Heart right ventricle (tissue), 16 donors: ENCODE measurements at regions of chr16 and their contacts with region 1.

Region 1: GRCh38 chr16:72894293-72895151 is 153.4 kb downstream of the ZFHX3 start:
- DNase-seq: peak in 1 of 2 donors; percentile 58
- ATAC-seq: peak; percentile 60 to 84 (median 72)
- H3K4me3 ChIP-seq: peak overlapping the region in 1 of 10 donors; percentile 11
- H3K27ac ChIP-seq: peak overlapping the region in 9 of 10 donors; percentile 3 to 70 (median 57)
- H3K4me1 ChIP-seq: peaks cover 0 to 40% (median 18%) of the 10 kb centered on the region in 9 donors
- H3K27me3 ChIP-seq: no peaks in the 10 kb centered on the region
- CTCF ChIP-seq: no peak

Region 2: DNA sequence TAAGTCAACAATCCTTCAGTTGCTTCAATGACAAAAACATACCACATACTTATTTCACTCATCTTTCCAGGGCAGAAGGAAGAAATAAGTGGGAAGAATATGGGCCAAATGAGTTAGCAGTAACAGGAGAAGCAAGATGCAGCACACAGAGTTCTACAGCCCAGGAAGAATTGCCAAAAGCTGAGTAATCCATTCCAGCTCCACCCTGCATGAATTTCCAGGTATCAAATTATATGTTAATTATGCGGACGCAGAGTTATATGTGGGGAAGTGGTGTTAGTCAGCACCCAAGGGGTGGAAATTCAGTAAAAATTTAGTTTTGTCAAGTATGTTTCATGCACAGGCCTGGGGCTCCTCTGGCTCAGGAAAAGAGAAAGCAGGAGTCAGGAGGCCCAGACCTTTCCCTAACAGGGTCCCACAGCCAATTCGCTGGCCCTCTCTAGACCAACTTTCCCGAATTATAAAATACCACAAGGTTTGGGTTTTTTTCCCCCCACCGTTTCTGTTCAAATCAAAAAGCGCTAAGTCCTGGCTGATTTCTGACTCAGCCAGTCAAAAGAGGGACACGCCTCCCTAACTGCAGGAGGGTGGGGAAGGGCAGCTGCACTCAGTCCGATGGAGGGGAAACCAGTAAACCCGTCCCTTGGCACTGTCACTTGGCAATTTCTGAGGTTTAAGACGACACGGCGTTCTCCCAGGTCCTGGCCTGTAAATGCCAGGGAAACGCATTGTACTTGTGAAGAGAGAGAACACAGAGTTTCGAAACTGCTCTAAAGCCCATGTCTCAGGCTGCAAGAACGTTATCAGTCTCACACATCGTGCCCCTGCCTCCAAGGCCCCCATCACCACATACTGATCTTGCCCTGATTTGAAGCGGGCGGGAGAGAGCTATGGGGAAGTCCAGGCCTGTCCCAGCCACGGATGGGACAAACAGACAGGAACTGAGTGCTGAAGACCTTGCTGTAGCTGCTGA is 95.3 kb after region 1 on chr16:
- intact Hi-C with region 1: loop called in 1 of 10 experiments (anchors 5 kb)
- DNase-seq: peak; percentile 36 to 51
- ATAC-seq: peak in 7 of 8 donors; percentile 22 to 77 (median 44)
- H3K4me3 ChIP-seq: peak overlapping the region in 3 of 10 donors; percentile 10 to 18 (median 17)
- H3K27ac ChIP-seq: peak overlapping the region; percentile 36 to 74 (median 62)
- H3K4me1 ChIP-seq: peaks cover 22 to 90% (median 69%) of the 10 kb centered on the region in 9 donors
- H3K27me3 ChIP-seq: no peaks in the 10 kb centered on the region
- CTCF ChIP-seq: no peak